ENCODE measurements at regions of chr3 and their contacts with region 1.

Region 1: GRCh38 chr3:56702490-56703315 is 19.6 kb upstream of the TASOR start:
- DNase-seq: no peak

Region 2: GRCh38 chr3:56801662-56802377 is 99.1 kb after region 1 on chr3 and contains the start of gene ARHGEF3:
- intact Hi-C with region 1: loop called (anchors 1 kb)
- DNase-seq: peak; percentile 95
- total RNA-seq, gene ARHGEF3: 23.1 TPM

Region 3: GRCh38 chr3:57078344-57078634 is 375.6 kb after region 1 on chr3:
- intact Hi-C with region 1: loop called (anchors 10 kb)
- DNase-seq: peak; percentile 78